CD4-positive, alpha-beta T cell (primary cell): ENCODE measurements at regions of chr17 and their contacts with region 1.

Region 1: DNA sequence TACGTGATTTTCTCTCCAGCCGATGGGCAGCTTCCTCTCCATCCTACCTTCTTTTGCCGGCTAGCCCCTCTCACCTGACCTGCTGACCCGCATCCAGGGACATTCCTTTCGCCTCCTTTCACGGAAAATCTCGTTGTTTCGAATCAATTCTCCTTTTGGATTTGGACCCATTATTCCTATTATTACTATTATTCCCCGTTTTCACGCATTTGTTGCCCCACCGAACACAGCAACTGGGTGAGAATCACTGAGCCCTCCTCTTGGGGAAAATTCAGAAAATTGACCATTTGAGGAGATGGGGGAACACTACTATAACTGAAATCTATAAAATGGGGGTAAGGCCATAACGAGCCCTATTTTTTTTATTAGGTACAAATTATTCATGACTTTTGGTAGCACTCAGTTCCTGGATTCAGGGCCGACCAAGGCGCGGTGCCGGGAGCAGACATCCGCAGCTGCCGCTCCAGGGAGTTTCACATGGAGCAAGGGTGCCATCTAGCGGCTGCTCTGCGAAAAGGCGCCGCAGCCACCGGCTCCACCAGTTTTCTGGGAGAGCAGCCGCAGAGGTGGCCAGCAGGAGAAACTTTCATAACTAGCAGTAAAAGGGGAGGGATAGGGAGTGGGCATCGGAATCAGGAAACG is 3.3 kb upstream of the HOXB8 start:
- DNase-seq: peak; percentile 68 to 91 (median 80)
- ATAC-seq: peak; percentile 75
- H3K4me3 ChIP-seq: no peak overlapping the region
- H3K4me3 Mint-ChIP-seq: peak overlapping the region; percentile 34
- H3K27ac ChIP-seq: no peak overlapping the region
- H3K27ac Mint-ChIP-seq: no peak overlapping the region
- H3K4me1 ChIP-seq: peaks cover 40% of the 10 kb centered on the region
- H3K4me1 Mint-ChIP-seq: peaks cover 44% of the 10 kb centered on the region
- H3K27me3 ChIP-seq: peaks cover 94 to 99% of the 10 kb centered on the region in 2 experiments
- H3K27me3 Mint-ChIP-seq: peaks cover 100% of the 10 kb centered on the region
- CTCF ChIP-seq: peak; percentile 99

Region 2: GRCh38 chr17:47840740-47841603 is 777.4 kb before region 1 on chr17 and contains the start of gene SCRN2:
- CTCF ChIA-PET with region 1: interaction called, 3 read pairs
- POLR2A ChIA-PET with region 1: no interaction called
- intact Hi-C with region 1: loop called (anchors 1 to 10 kb)
- DNase-seq: peak; percentile 70 to 91 (median 84)
- ATAC-seq: peak; percentile 89
- H3K4me3 ChIP-seq: peak within 1 kb of the TSS; percentile 73
- H3K4me3 Mint-ChIP-seq: peak within 1 kb of the TSS; percentile 94
- H3K27ac ChIP-seq: peak within 1 kb of the TSS in 1 of 2 donors; percentile 47
- H3K27ac Mint-ChIP-seq: peak within 1 kb of the TSS; percentile 41
- H3K4me1 ChIP-seq: peaks cover 38% of the 10 kb centered on the region
- H3K4me1 Mint-ChIP-seq: peaks cover 26% of the 10 kb centered on the region
- H3K27me3 ChIP-seq: peaks cover 18 to 19% of the 10 kb centered on the region in 2 experiments
- H3K27me3 Mint-ChIP-seq: peaks cover 23% of the 10 kb centered on the region
- CTCF ChIP-seq: peak; percentile 93
- total RNA-seq, gene SCRN2: 15.3 to 17.2 TPM

Region 3: GRCh38 chr17:48084932-48085444 is 533.4 kb before region 1 on chr17:
- CTCF ChIA-PET with region 1: no interaction called
- POLR2A ChIA-PET with region 1: no interaction called
- intact Hi-C with region 1: loop called in 1 of 2 experiments (anchors 2 kb)
- DNase-seq: no peak
- ATAC-seq: no peak
- H3K4me3 ChIP-seq: no peak overlapping the region
- H3K4me3 Mint-ChIP-seq: no peak overlapping the region
- H3K27ac ChIP-seq: no peak overlapping the region
- H3K27ac Mint-ChIP-seq: no peak overlapping the region
- H3K4me1 ChIP-seq: no peaks in the 10 kb centered on the region
- H3K4me1 Mint-ChIP-seq: peaks cover 10% of the 10 kb centered on the region
- H3K27me3 ChIP-seq: no peaks in the 10 kb centered on the region
- H3K27me3 Mint-ChIP-seq: no peaks in the 10 kb centered on the region
- CTCF ChIP-seq: no peak

Region 4: GRCh38 chr17:48335858-48336500 is 282.4 kb before region 1 on chr17:
- CTCF ChIA-PET with region 1: interaction called, 18 read pairs
- POLR2A ChIA-PET with region 1: interaction called, 3 read pairs
- intact Hi-C with region 1: loop called in 1 of 2 experiments (anchors 5 kb)
- DNase-seq: peak in 3 of 14 experiments; percentile 74 to 79 (median 76)
- ATAC-seq: peak; percentile 66
- H3K4me3 ChIP-seq: no peak overlapping the region
- H3K4me3 Mint-ChIP-seq: no peak overlapping the region
- H3K27ac ChIP-seq: no peak overlapping the region
- H3K27ac Mint-ChIP-seq: no peak overlapping the region
- H3K4me1 ChIP-seq: no peaks in the 10 kb centered on the region
- H3K4me1 Mint-ChIP-seq: peaks cover 6% of the 10 kb centered on the region
- H3K27me3 ChIP-seq: no peaks in the 10 kb centered on the region
- H3K27me3 Mint-ChIP-seq: no peaks in the 10 kb centered on the region
- CTCF ChIP-seq: peak; percentile 85

Region 5: GRCh38 chr17:48577946-48578615 is 40.3 kb before region 1 on chr17 and contains the start of gene HOXB4:
- CTCF ChIA-PET with region 1: no interaction called
- POLR2A ChIA-PET with region 1: no interaction called
- intact Hi-C with region 1: no loop called
- DNase-seq: peak in 13 of 14 experiments; percentile 31 to 84 (median 48)
- ATAC-seq: peak; percentile 72
- H3K4me3 ChIP-seq: peak within 1 kb of the TSS; percentile 84
- H3K4me3 Mint-ChIP-seq: peak within 1 kb of the TSS; percentile 92
- H3K27ac ChIP-seq: peak within 1 kb of the TSS in 1 of 2 donors; percentile 36
- H3K27ac Mint-ChIP-seq: no peak within 1 kb of the TSS
- H3K4me1 ChIP-seq: peaks cover 61% of the 10 kb centered on the region
- H3K4me1 Mint-ChIP-seq: peaks cover 58% of the 10 kb centered on the region
- H3K27me3 ChIP-seq: peaks cover 42 to 45% of the 10 kb centered on the region in 2 experiments
- H3K27me3 Mint-ChIP-seq: peaks cover 81% of the 10 kb centered on the region
- CTCF ChIP-seq: no peak
- total RNA-seq, gene HOXB4: 0.16 to 0.17 TPM

Region 6: GRCh38 chr17:48593840-48594537 is 24.4 kb before region 1 on chr17:
- CTCF ChIA-PET with region 1: interaction called, 24 read pairs
- POLR2A ChIA-PET with region 1: interaction called, 3 read pairs
- intact Hi-C with region 1: no loop called
- DNase-seq: peak; percentile 61 to 91 (median 82)
- ATAC-seq: peak; percentile 74
- H3K4me3 ChIP-seq: peak overlapping the region; percentile 45
- H3K4me3 Mint-ChIP-seq: peak overlapping the region; percentile 74
- H3K27ac ChIP-seq: no peak overlapping the region
- H3K27ac Mint-ChIP-seq: no peak overlapping the region
- H3K4me1 ChIP-seq: peaks cover 53% of the 10 kb centered on the region
- H3K4me1 Mint-ChIP-seq: peaks cover 46% of the 10 kb centered on the region
- H3K27me3 ChIP-seq: peaks cover 83 to 94% of the 10 kb centered on the region in 2 experiments
- H3K27me3 Mint-ChIP-seq: peaks cover 98% of the 10 kb centered on the region
- CTCF ChIP-seq: peak; percentile 83

Region 7: DNA sequence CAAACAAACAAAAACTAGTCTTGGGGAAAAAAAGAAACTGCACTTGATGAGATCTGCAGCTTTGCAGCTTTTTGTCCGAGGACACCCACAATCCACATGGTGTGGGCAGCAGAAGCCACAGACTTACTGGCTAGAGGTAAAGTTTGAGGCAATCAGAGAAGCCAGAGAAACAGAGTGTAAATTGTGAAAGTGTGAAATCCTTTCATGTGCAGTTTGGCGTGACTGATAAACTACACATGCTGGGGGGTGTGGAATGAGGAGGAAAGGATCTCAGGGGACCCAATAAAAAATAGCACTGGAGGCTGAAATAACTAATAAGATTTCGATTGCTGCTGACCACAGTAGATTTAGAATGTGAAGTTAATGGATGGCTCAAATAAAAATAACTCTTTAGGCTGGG is 152.6 kb after region 1 on chr17:
- CTCF ChIA-PET with region 1: no interaction called
- POLR2A ChIA-PET with region 1: no interaction called
- intact Hi-C with region 1: no loop called
- DNase-seq: no peak
- ATAC-seq: no peak
- H3K4me3 ChIP-seq: no peak overlapping the region
- H3K4me3 Mint-ChIP-seq: no peak overlapping the region
- H3K27ac ChIP-seq: no peak overlapping the region
- H3K27ac Mint-ChIP-seq: no peak overlapping the region
- H3K4me1 ChIP-seq: no peaks in the 10 kb centered on the region
- H3K4me1 Mint-ChIP-seq: no peaks in the 10 kb centered on the region
- H3K27me3 ChIP-seq: peaks cover 12 to 21% of the 10 kb centered on the region in 2 experiments
- H3K27me3 Mint-ChIP-seq: peaks cover 71% of the 10 kb centered on the region
- CTCF ChIP-seq: no peak